H1 (cell line): ENCODE measurements at regions of chr3 and their contacts with region 1.

Region 1: DNA sequence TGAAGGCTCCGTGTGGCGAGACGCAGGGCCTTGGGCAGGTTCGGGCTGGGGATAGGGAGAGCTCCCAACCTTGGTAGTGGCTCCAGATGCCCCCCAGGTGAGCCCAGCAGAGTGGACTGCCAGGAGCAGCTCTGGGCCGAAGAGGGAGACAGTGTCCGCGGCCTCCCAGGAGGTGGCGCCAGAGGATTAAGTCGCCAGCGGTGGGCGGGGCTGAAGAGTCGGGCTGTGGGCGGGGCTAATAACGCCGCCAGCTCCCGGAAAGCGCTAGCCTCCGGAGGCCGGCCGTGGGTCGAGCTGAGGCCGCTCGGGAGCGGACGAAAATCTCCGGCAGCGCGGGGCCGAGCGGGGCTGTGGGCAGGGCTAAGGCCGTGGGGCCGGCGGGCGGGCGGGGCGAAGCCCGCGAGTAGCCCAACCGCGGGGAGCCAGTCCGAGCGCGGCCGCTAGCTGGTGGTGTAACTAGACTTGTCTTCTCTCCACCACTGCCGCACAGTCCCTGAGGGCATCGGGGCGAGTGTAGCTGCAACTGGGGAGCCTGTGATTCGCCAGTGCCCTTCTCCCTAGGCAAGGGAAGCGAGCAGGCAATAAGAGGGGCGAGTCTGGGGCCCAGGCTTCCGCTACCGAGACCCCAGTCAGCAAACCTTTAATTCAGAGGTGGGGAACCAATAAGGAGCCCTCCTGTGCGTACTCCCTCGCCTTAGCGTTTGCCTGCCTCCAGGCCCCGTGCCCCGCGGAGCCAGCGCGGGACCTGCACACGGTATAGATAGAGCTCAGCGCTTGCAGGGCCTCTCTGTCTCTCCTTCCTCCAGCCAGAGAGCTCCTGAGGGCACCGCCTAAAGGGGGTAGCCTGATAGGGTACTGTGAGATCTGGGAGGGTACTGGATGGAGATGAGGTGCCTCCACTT is 14.4 kb upstream of the BSN start:
- DNase-seq: peak; percentile 87 to 99
- H3K4me3 ChIP-seq: peak overlapping the region; percentile 26 to 71 (median 60)
- H3K27ac ChIP-seq: no peak overlapping the region
- H3K4me1 ChIP-seq: peaks cover 0 to 21% (median 3%) of the 10 kb centered on the region in 4 experiments; a peak in 6 of 7 replicates
- H3K27me3 ChIP-seq: no peaks in the 10 kb centered on the region
- CTCF ChIP-seq: peak in 2 of 3 experiments; percentile 88 to 96; a peak in 3 of 4 replicates
- EP300 ChIP-seq: no peak
- POLR2A ChIP-seq: peak in 1 of 2 experiments; percentile 64; a peak in 2 of 3 replicates
- RAD21 ChIP-seq: peak; percentile 96

Region 2: GRCh38 chr3:49519296-49519695 is 20.6 kb before region 1 on chr3:
- CTCF ChIA-PET with region 1: interaction called, 11 read pairs
- POLR2A ChIA-PET with region 1: interaction called, 5 read pairs
- DNase-seq: no peak
- H3K4me3 ChIP-seq: no peak overlapping the region
- H3K27ac ChIP-seq: no peak overlapping the region
- H3K4me1 ChIP-seq: peaks cover 0 to 4% (median 0%) of the 10 kb centered on the region in 4 experiments; a peak in 3 of 7 replicates
- H3K27me3 ChIP-seq: no peaks in the 10 kb centered on the region
- CTCF ChIP-seq: no peak
- EP300 ChIP-seq: no peak
- POLR2A ChIP-seq: no peak
- RAD21 ChIP-seq: no peak

Region 3: GRCh38 chr3:49566312-49566711 is 26.4 kb after region 1 on chr3:
- CTCF ChIA-PET with region 1: interaction called, 24 read pairs
- POLR2A ChIA-PET with region 1: interaction called, 3 read pairs
- DNase-seq: no peak
- H3K4me3 ChIP-seq: no peak overlapping the region
- H3K27ac ChIP-seq: no peak overlapping the region
- H3K4me1 ChIP-seq: peaks cover 0 to 12% (median 6%) of the 10 kb centered on the region in 4 experiments; a peak in 5 of 7 replicates
- H3K27me3 ChIP-seq: no peaks in the 10 kb centered on the region
- CTCF ChIP-seq: peak in 2 of 3 experiments; percentile 42 to 69; a peak in 3 of 4 replicates
- EP300 ChIP-seq: no peak
- POLR2A ChIP-seq: no peak
- RAD21 ChIP-seq: peak; percentile 53 to 57

Region 4: GRCh38 chr3:49656541-49657112 is 116.7 kb after region 1 on chr3:
- CTCF ChIA-PET with region 1: interaction called, 20 read pairs
- POLR2A ChIA-PET with region 1: interaction called, 5 read pairs
- DNase-seq: no peak
- H3K4me3 ChIP-seq: no peak overlapping the region
- H3K27ac ChIP-seq: no peak overlapping the region
- H3K4me1 ChIP-seq: no peaks in the 10 kb centered on the region
- H3K27me3 ChIP-seq: no peaks in the 10 kb centered on the region
- CTCF ChIP-seq: peak in 2 of 3 experiments; percentile 10 to 16; a peak in 1 of 4 replicates
- EP300 ChIP-seq: no peak
- POLR2A ChIP-seq: no peak
- RAD21 ChIP-seq: peak in 1 of 2 experiments; percentile 38; a peak in 1 of 4 replicates

Region 5: DNA sequence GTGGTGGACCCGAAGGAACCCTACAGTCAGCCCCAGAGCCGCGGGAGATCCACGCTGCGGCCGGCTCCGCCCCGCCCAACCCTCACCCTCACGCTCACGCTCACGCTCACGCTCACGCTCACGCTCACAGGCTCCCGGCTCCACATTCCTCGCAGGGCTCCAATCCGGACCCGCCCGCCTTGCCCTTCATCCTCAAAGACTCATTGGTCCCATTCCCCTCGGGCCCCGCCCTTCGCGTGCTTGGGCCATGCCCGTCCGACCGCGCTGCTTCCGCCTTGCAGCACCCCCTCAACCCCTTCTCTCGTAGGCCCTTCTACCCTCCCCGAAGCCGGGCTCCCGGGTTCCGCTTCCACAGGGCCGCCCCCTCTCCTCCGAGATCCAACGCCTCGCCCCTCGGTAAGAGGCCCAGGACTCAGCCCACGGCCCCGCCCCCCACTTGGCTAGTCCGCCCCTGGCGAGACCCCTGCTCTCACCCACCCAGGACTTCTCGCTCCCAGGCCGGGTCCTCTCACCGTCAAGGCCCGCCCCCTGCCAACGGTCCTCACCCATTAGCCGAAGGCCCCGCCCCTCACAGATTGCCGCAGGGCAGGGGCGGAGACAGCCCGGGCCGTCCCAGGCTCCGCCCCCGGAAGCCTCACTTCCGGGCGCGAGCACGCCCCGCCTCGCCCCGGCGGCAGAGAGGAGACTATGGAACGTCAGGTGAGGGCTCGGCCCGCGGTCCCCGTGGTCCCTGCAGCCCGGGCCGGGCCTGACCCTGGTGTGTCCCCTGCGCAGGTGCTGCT is 134.0 kb after region 1 on chr3 and contains the start of gene APEH:
- CTCF ChIA-PET with region 1: interaction called, 159 read pairs
- POLR2A ChIA-PET with region 1: interaction called, 21 read pairs
- DNase-seq: peak; percentile 88 to 99
- H3K4me3 ChIP-seq: peak within 1 kb of the TSS; percentile 84 to 91 (median 86)
- H3K27ac ChIP-seq: peak within 1 kb of the TSS; percentile 90
- H3K4me1 ChIP-seq: peaks cover 0 to 8% (median 5%) of the 10 kb centered on the region in 4 experiments; a peak in 4 of 7 replicates
- H3K27me3 ChIP-seq: no peaks in the 10 kb centered on the region; a peak in 1 of 7 replicates
- CTCF ChIP-seq: no peak
- EP300 ChIP-seq: 0 out of 3 replicates have a peak, but pooled peaks of 1 of the 2 experiments have one; percentile 6
- POLR2A ChIP-seq: peak in 1 of 2 experiments; percentile 66; a peak in 2 of 3 replicates
- RAD21 ChIP-seq: no peak
- total RNA-seq, gene APEH: 222 and 236 TPM in 2 replicates